Activated CD4-positive, alpha-beta T cell treated with anti-CD3 and anti-CD28 coated beads, Interleukin-2, amount 10 ng/mL, durations not matched to agents 24 days and 14 days (primary cell): ENCODE measurements at regions of chr1 and their contacts with region 1.

Region 1: DNA sequence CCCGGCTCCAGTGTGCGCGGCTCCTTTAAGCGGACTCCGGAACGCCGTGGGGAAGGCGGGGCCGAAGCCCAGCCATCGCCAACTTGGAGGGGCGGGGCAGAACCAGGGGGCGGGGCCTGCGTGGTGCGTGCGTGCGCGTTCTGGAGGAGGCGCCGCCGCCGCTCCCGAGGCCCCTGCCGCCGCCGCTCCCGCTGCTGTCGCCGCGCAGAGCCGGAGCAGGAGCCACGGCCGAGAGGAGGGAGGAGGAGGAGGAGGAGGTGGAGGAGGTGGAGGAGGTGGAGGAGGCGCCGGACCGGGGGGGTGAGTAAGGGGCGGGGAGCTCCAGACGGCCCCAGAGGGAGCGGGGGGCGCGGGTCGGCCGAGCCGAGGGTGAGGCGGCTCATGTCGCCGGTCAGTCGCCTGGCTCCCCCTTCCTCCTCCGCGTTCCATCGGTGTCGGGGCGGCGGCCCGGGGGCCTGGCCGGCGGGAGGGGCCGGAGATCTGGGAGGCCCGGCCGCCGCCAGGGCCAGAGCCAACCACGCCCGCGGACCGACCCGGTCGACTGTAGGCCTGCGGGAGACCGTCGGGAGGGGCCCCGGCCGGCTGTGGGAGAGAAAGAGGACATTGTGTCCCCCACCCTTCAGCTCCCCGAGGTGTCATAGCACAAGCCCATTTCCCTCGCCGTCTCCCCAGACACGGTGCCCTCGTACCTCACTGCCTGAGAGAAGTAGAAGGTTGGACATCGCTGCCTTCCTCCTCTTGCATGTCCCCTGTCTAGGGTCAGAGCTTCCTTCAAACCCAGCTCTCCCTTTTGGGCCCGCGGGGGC is at the start of gene RAP1A:
- DNase-seq: peak; percentile 97
- H3K4me3 Mint-ChIP-seq: peak within 1 kb of the TSS; percentile 99
- H3K27ac Mint-ChIP-seq: peak within 1 kb of the TSS; percentile 93
- H3K4me1 Mint-ChIP-seq: peaks cover 66% of the 10 kb centered on the region
- H3K27me3 Mint-ChIP-seq: no peaks in the 10 kb centered on the region
- total RNA-seq, gene RAP1A: 306 and 307 TPM in 2 replicates

Region 2: GRCh38 chr1:110872745-110873720 is 746.8 kb before region 1 on chr1 and contains the start of gene CD53:
- intact Hi-C with region 1: loop called (anchors 10 kb)
- DNase-seq: peak; percentile 87
- H3K4me3 Mint-ChIP-seq: peak within 1 kb of the TSS; percentile 98
- H3K27ac Mint-ChIP-seq: peak within 1 kb of the TSS; percentile 97
- H3K4me1 Mint-ChIP-seq: peaks cover 34% of the 10 kb centered on the region
- H3K27me3 Mint-ChIP-seq: no peaks in the 10 kb centered on the region
- total RNA-seq, gene CD53: 185 and 190 TPM in 2 replicates

Region 3: DNA sequence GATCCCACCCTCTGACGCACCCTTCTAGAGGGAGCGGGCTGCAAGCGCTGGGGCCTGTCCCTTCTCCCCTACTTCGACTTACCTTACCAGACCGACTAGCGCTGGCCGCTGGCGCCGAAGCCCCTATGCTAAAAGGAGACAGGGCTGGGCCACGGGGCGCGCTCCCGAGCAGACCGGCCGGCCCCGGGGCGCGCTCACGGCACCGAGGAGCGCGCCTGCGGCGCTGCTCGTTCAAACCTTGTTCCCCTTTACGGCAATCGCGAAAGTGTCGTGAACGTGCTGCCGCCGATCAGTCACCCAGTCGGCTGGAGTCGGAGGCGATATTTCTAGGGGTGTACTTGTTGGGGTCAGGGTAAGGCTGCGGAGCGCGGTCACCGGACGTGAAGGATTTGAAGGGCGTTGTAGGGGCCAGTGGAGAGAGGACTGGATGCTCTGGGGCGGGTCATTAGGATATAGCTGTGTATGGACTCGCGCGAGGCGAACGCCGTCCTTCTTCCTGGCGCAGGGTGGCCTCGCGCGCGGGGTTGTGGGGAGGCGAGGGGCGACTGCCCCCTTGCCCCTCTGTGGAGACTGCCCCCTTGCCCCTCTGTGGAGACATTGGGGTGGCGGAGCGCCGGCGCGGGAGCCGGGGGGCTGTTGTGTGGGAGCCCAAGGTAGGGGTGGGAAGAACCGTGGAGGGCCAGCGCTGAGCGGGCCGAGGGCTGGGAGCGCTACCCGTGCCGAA is 479.7 kb before region 1 on chr1 and contains the starts of genes CEPT1 and DRAM2:
- intact Hi-C with region 1: loop called (anchors 10 kb)
- DNase-seq: peak; percentile 98
- H3K4me3 Mint-ChIP-seq: peak within 1 kb of the TSS; percentile 92
- H3K27ac Mint-ChIP-seq: peak within 1 kb of the TSS; percentile 95
- H3K4me1 Mint-ChIP-seq: peaks cover 33% of the 10 kb centered on the region
- H3K27me3 Mint-ChIP-seq: no peaks in the 10 kb centered on the region
- total RNA-seq, gene CEPT1: 32.4 and 32.9 TPM in 2 replicates
- total RNA-seq, gene DRAM2: 25.8 and 26.5 TPM in 2 replicates

Region 4: GRCh38 chr1:111507411-111508201 is 112.2 kb before region 1 on chr1:
- intact Hi-C with region 1: loop called (anchors 1 kb)
- DNase-seq: peak; percentile 88
- H3K4me3 Mint-ChIP-seq: peak overlapping the region; percentile 79
- H3K27ac Mint-ChIP-seq: peak overlapping the region; percentile 94
- H3K4me1 Mint-ChIP-seq: peaks cover 66% of the 10 kb centered on the region
- H3K27me3 Mint-ChIP-seq: no peaks in the 10 kb centered on the region

Region 5: DNA sequence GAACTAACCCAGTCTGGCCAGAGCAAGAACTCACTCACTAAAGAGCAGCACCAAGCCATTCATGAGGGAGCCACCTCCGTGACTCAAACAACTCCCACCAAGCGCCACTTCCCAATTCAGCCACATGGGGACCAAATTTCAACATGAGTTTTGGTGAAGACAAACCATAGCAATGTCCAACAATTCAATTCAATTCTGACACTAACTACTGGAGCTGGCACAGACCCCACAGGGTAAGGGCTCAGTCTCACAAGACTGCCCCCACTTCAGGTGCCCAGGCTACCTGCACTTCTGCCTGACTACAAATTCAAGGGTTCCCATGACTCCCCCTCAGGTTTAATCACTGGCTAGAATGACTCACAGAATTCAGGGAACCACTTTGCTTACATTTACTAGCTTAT is 49.1 kb before region 1 on chr1:
- intact Hi-C with region 1: no loop called
- DNase-seq: peak; percentile 73
- H3K4me3 Mint-ChIP-seq: no peak overlapping the region
- H3K27ac Mint-ChIP-seq: peak overlapping the region; percentile 4
- H3K4me1 Mint-ChIP-seq: peaks cover 19% of the 10 kb centered on the region
- H3K27me3 Mint-ChIP-seq: no peaks in the 10 kb centered on the region

Region 6: DNA sequence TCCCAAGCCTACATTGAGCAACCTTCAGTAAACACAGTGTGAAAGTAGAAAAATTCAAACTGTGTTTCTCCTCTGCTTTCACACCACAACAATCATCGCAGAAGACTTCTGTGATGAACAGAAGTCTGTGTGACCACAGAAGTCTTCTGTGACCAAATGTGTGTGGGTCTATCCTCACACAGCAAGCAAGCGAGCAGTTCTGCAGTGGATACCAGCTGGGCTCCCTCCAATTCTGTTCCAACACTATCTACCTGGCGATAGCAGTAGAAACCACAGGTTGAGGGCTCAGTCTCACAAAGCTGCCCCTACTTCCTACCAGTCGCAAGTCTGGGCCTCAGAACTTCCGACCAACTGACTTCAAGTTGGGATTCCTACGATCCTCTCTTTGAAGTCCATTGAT is 21.3 kb before region 1 on chr1:
- intact Hi-C with region 1: loop called (anchors 1 kb)
- DNase-seq: peak; percentile 85
- H3K4me3 Mint-ChIP-seq: peak overlapping the region; percentile 77
- H3K27ac Mint-ChIP-seq: peak overlapping the region; percentile 89
- H3K4me1 Mint-ChIP-seq: peaks cover 93% of the 10 kb centered on the region
- H3K27me3 Mint-ChIP-seq: no peaks in the 10 kb centered on the region

Region 7: DNA sequence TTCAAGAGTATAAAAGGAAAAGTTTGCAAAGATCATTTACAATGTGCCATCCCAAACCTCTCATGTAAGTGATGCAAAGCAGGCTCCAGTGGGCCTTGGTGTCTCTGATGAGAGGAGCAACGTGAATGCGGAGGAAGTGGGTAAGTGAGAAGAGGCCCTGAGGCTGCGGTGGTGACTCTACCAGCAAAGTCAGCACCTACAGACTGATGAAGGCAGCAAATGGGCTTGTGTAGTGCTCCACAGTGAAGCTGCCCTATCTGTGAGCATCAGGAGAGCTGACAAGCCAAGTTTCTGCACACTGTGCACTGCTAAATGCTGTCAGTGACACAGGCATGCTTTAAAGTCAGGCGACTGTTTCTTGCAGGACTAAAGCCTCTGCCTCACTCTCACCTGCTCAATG is 15.9 kb before region 1 on chr1:
- intact Hi-C with region 1: loop called (anchors 1 kb)
- DNase-seq: peak; percentile 94
- H3K4me3 Mint-ChIP-seq: peak overlapping the region; percentile 87
- H3K27ac Mint-ChIP-seq: peak overlapping the region; percentile 98
- H3K4me1 Mint-ChIP-seq: peaks cover 66% of the 10 kb centered on the region
- H3K27me3 Mint-ChIP-seq: no peaks in the 10 kb centered on the region

Region 8: DNA sequence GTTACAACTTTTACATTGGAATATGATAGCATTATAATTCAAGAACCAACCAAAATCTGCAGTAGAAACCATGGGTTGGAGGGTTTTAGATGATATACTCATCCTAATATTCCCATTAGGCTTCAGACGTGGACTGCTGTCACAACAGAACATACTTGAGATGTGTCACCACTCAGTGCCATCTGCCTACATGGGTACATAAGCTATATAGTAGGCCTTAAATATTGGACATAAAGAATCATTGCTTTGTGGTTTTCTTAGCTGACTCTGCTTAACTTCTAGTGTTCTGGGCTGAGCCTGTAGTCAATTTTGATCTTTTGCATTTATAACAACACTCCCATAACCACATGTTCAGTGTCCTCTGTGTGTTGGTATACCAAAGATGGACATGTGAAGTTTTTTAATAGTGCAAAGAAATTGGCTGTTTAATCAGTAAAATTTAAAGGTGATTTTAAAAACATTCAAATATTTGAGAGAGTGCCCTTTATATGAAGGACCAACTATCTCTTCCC is 14.0 kb after region 1 on chr1:
- intact Hi-C with region 1: loop called (anchors 1 kb)
- DNase-seq: no peak
- H3K4me3 Mint-ChIP-seq: no peak overlapping the region
- H3K27ac Mint-ChIP-seq: no peak overlapping the region
- H3K4me1 Mint-ChIP-seq: peaks cover 61% of the 10 kb centered on the region
- H3K27me3 Mint-ChIP-seq: no peaks in the 10 kb centered on the region

Region 9: GRCh38 chr1:111647736-111648135 is 27.9 kb after region 1 on chr1:
- intact Hi-C with region 1: no loop called
- DNase-seq: no peak
- H3K4me3 Mint-ChIP-seq: peak overlapping the region; percentile 54
- H3K27ac Mint-ChIP-seq: peak overlapping the region; percentile 84
- H3K4me1 Mint-ChIP-seq: peaks cover 51% of the 10 kb centered on the region
- H3K27me3 Mint-ChIP-seq: no peaks in the 10 kb centered on the region